WTC11 (cell line): ENCODE measurements at regions of chr11 and their contacts with region 1.

Region 1: DNA sequence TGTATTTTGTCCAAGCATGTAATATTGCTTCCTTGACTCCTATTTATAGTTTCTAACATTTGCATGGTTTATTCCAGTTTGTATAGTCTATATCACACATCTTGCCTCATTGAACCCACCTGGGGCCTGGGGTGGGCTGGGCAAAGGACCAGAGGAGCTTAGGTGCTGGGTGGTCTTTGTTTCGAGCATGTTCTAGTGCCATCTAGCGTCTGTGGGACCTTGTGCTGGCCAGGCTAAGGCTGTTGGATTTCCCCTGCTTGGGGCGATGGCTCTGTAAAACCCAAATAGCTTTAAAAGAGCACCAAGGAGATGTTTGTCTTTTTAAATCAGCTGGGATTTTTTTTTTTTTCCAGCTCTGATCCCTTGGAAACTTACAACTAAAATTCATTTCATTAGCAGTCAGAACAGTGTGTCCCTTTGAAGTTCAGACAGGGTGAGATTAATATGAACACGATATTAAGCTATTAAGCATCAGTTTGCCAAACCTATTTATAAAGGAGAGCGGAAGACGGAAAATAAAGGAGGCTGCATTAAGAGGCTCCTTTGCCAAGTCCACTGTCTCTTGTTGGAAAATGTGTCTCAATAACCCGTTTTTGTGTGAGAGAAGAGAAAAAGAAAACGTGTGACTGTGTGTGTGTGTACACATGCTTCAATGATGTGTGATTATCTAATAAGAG is 157.4 kb downstream of the COMMD9 start:
- DNase-seq: peak; percentile 67
- ATAC-seq: peak; percentile 96
- H3K4me3 Mint-ChIP-seq: no peak overlapping the region
- H3K27ac Mint-ChIP-seq: 0 out of 2 replicates have a peak overlapping the region, but pooled peaks have one; percentile 23
- H3K4me1 Mint-ChIP-seq: peaks cover 49% of the 10 kb centered on the region
- H3K27me3 Mint-ChIP-seq: no peaks in the 10 kb centered on the region
- CTCF ChIP-seq: peak; percentile 35; the same call in 1 of the 2 replicates

Region 2: GRCh38 chr11:36034551-36035331 is 97.1 kb before region 1 on chr11:
- CTCF ChIA-PET with region 1: interaction called, 10 read pairs
- POLR2A ChIA-PET with region 1: no interaction called
- DNase-seq: no peak
- ATAC-seq: no peak
- H3K4me3 Mint-ChIP-seq: no peak overlapping the region
- H3K27ac Mint-ChIP-seq: no peak overlapping the region
- H3K4me1 Mint-ChIP-seq: peaks cover 28% of the 10 kb centered on the region
- H3K27me3 Mint-ChIP-seq: no peaks in the 10 kb centered on the region
- CTCF ChIP-seq: no peak

Region 3: GRCh38 chr11:36056160-36056751 is 75.6 kb before region 1 on chr11:
- CTCF ChIA-PET with region 1: interaction called, 51 read pairs
- POLR2A ChIA-PET with region 1: no interaction called
- DNase-seq: peak; percentile 71
- ATAC-seq: peak; percentile 88
- H3K4me3 Mint-ChIP-seq: no peak overlapping the region
- H3K27ac Mint-ChIP-seq: no peak overlapping the region
- H3K4me1 Mint-ChIP-seq: peaks cover 29% of the 10 kb centered on the region
- H3K27me3 Mint-ChIP-seq: no peaks in the 10 kb centered on the region
- CTCF ChIP-seq: peak; percentile 81

Region 4: GRCh38 chr11:36073411-36074203 is 58.3 kb before region 1 on chr11:
- CTCF ChIA-PET with region 1: interaction called, 74 read pairs
- POLR2A ChIA-PET with region 1: no interaction called
- DNase-seq: no peak
- ATAC-seq: no peak
- H3K4me3 Mint-ChIP-seq: no peak overlapping the region
- H3K27ac Mint-ChIP-seq: peak overlapping the region; percentile 82
- H3K4me1 Mint-ChIP-seq: peaks cover 59% of the 10 kb centered on the region
- H3K27me3 Mint-ChIP-seq: no peaks in the 10 kb centered on the region; the same call in 1 of the 2 replicates
- CTCF ChIP-seq: no peak

Region 5: DNA sequence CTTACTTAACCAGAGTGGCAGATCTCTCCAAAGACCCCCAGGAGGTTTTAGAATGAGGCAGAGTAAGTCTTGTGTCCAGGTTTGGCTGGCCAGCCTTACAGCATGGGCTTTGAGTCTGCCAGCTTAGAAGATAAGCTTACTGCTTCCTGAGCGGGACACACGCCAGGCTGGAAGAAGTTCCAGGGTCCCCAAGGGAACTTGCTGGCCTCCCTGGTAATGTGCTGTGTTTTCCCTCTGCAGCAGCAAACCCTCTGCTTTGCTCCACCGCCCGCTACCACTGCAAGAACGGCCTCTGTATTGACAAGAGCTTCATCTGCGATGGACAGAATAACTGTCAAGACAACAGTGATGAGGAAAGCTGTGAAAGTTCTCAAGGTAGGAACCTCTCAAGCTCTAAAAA is 33.8 kb before region 1 on chr11:
- CTCF ChIA-PET with region 1: interaction called, 16 read pairs
- POLR2A ChIA-PET with region 1: no interaction called
- DNase-seq: no peak
- ATAC-seq: no peak
- H3K4me3 Mint-ChIP-seq: no peak overlapping the region
- H3K27ac Mint-ChIP-seq: peak overlapping the region; percentile 47; the same call in 1 of the 2 replicates
- H3K4me1 Mint-ChIP-seq: peaks cover 37% of the 10 kb centered on the region
- H3K27me3 Mint-ChIP-seq: no peaks in the 10 kb centered on the region; the same call in 1 of the 2 replicates
- CTCF ChIP-seq: no peak

Region 6: GRCh38 chr11:36142439-36142838 is 10.6 kb after region 1 on chr11:
- CTCF ChIA-PET with region 1: interaction called, 13 read pairs
- POLR2A ChIA-PET with region 1: no interaction called
- DNase-seq: no peak
- ATAC-seq: peak; percentile 29
- H3K4me3 Mint-ChIP-seq: no peak overlapping the region
- H3K27ac Mint-ChIP-seq: no peak overlapping the region
- H3K4me1 Mint-ChIP-seq: peaks cover 35% of the 10 kb centered on the region
- H3K27me3 Mint-ChIP-seq: no peaks in the 10 kb centered on the region
- CTCF ChIP-seq: no peak

Region 7: DNA sequence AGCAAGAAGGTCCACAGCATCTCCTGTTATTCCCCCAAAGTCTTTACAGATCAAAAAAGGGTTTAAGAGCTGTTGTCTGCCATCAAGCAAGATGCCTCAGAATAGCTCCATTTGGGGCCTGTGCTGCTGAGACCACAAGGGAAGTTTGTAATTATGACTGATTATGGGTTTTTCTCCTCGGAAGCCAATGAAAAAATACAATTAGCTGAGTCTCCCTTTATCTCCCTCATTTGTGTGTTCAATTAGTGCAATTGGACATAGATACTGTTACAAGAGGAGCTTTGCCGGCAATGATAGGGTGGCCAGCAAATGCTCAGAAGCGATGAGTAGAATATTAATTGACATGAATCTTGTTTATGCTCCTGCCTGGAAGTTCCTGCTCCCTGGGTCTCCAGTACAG is 73.7 kb after region 1 on chr11:
- CTCF ChIA-PET with region 1: no interaction called
- POLR2A ChIA-PET with region 1: no interaction called
- DNase-seq: no peak
- ATAC-seq: no peak
- H3K4me3 Mint-ChIP-seq: no peak overlapping the region
- H3K27ac Mint-ChIP-seq: no peak overlapping the region
- H3K4me1 Mint-ChIP-seq: peaks cover 3% of the 10 kb centered on the region; the same call in 1 of the 2 replicates
- H3K27me3 Mint-ChIP-seq: no peaks in the 10 kb centered on the region
- CTCF ChIP-seq: no peak